KBM-7 (cell line): ENCODE measurements at regions of chr22 and their contacts with region 1.

Region 1: DNA sequence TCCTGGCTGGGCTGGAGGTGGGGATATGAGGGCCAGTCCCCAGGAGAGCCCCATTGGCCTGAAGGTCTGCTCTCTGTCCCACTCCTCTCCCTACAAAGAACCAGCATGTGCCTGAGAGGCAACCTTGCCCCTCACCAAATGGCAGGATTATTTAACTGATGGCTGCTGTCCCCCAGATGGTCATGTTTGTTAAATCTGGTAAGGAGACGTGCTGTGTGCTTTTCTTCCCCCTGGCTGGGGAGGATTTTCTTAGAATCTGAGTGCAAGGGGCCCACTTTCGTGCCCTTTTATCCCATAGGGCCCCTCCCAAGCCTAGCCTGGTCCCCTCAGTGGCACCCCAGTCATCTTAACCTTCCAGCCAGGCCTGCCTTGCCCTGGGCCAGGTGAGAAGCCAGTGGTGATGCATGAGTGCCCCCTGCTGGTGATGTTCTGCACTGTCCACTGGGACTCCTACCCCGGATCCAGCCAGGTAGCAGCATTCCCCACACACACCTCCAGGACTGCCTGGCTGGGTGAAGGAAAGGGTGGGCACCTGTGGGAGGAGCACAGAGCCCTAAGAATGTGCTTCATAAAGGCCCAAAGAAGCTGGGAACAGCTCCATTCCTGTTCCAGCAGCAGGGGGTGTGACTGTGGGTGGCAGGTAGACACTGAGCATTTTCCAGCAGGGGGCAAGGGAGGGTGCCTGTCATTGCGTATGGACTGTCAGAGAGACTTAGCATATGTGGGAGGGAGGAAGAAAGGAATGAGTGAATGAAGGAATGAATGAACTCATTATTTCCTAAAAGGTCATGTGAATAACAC is 28.9 kb downstream of the MFNG start:
- DNase-seq: peak; percentile 78

Region 2: GRCh38 chr22:37316875-37317371 is 140.4 kb before region 1 on chr22:
- in situ Hi-C with region 1: loop called (anchors 10 kb)
- DNase-seq: peak; percentile 79